ENCODE measurements at regions of chr10 and their contacts with region 1.

Region 1: DNA sequence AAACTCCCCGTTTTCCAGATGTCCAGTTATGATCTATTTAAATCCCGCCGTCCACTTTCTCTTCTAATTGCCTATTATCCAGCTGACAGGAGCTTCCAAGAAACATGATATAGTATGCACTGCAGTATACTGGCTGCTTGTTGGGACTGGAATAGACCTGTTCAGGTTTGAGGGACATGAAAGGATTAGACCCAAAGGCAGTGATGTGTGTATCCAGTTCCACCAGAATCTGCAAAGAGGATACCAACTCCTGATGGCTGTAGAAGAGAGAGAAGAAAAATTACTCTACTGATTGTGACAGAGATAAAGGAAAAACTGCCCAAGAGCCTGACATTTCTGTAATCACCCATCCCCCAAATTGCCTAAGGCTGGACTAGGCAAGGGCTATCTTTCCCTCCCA is 8.8 kb downstream of the MSS51 start:
- DNase-seq: no peak
- H3K27ac ChIP-seq: no peak overlapping the region
- CTCF ChIP-seq: no peak

Region 2: GRCh38 chr10:73413528-73414229 is 10.8 kb before region 1 on chr10 and contains the start of gene ANXA7:
- CTCF ChIA-PET with region 1: no interaction called
- POLR2A ChIA-PET with region 1: interaction called, 12 read pairs
- DNase-seq: peak; percentile 98
- H3K27ac ChIP-seq: peak within 1 kb of the TSS; percentile 96
- CTCF ChIP-seq: peak; percentile 6; the same call in 1 of the 2 replicates

Measured in RWPE1 (cell line).